OCI-LY7 (cell line): ENCODE measurements at regions of chr5 and their contacts with region 1.

Region 1: DNA sequence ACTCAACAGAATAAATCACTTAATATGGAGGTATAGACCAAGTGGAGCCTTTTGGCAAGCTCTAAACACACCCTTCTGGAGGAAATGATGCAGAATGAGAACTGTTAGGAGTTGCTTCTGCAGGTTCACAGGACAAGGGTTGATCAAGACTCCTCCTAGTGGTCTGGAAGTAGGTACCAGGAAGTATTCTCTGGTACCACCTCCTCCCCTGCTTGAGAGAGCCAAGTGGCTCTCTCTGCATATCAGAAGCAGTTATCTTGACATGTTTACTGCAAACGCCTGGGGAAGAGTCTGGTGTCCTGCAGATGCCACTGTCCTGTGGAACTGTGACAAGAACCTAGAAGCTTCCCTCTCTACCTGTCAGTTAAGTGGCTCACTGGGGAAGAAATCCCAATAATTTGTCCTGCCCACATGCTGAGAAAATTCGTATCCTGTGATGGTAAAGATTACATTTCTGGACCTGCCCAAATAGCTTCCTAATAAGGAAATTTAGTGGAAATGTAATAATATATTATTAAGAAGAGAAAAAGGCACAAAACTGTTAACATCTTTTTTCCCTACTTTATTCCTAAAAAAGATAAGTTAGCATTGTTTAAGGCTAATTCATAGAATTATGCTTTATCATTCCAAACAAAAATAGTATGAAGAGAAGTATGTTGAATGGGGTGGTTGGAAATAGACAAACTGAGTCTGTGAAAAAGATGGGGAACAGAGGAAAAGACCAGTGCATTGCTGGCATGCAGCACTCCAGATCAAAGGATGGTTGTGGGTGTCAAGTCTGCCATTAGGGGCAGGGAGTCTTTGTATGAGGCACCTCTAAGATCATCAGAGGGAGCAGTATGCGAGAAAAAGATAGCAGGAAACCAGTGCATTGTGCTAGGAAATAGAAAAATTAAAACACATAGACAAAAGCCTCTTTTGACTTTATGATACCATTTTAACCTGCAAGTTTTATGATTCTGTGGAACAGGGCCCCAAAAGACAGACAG is 118.8 kb downstream of the CDC42SE2 start:
- DNase-seq: peak; percentile 87
- H3K4me3 ChIP-seq: no peak overlapping the region
- H3K27ac ChIP-seq: peak overlapping the region; percentile 87
- H3K4me1 ChIP-seq: peaks cover 60% of the 10 kb centered on the region
- CTCF ChIP-seq: peak; percentile 87

Region 2: GRCh38 chr5:130323804-130324454 is 1058.8 kb before region 1 on chr5:
- CTCF ChIA-PET with region 1: no interaction called
- POLR2A ChIA-PET with region 1: interaction called, 3 read pairs
- intact Hi-C with region 1: loop called (anchors 5 kb)
- DNase-seq: peak; percentile 93
- H3K4me3 ChIP-seq: peak overlapping the region; percentile 41
- H3K27ac ChIP-seq: peak overlapping the region; percentile 97
- H3K4me1 ChIP-seq: peaks cover 42% of the 10 kb centered on the region
- CTCF ChIP-seq: no peak

Region 3: GRCh38 chr5:130871346-130872086 is 511.2 kb before region 1 on chr5:
- CTCF ChIA-PET with region 1: no interaction called
- POLR2A ChIA-PET with region 1: interaction called, 4 read pairs
- intact Hi-C with region 1: loop called (anchors 10 kb)
- DNase-seq: peak; percentile 30
- H3K4me3 ChIP-seq: no peak overlapping the region
- H3K27ac ChIP-seq: no peak overlapping the region
- H3K4me1 ChIP-seq: no peaks in the 10 kb centered on the region
- CTCF ChIP-seq: peak; percentile 75

Region 4: GRCh38 chr5:131209506-131210150 is 173.1 kb before region 1 on chr5:
- CTCF ChIA-PET with region 1: interaction called, 3 read pairs
- POLR2A ChIA-PET with region 1: interaction called, 7 read pairs
- intact Hi-C with region 1: loop called (anchors 2 kb)
- DNase-seq: peak; percentile 94
- H3K4me3 ChIP-seq: peak overlapping the region; percentile 68
- H3K27ac ChIP-seq: peak overlapping the region; percentile 96
- H3K4me1 ChIP-seq: peaks cover 67% of the 10 kb centered on the region
- CTCF ChIP-seq: no peak

Region 5: GRCh38 chr5:131394128-131394527 is 11.4 kb after region 1 on chr5:
- CTCF ChIA-PET with region 1: no interaction called
- POLR2A ChIA-PET with region 1: no interaction called
- intact Hi-C with region 1: no loop called
- DNase-seq: no peak
- H3K4me3 ChIP-seq: no peak overlapping the region
- H3K27ac ChIP-seq: no peak overlapping the region
- H3K4me1 ChIP-seq: no peaks in the 10 kb centered on the region
- CTCF ChIP-seq: no peak